GM10248 (cell line): ENCODE measurements at regions of chr6 and their contacts with region 1.

Region 1: DNA sequence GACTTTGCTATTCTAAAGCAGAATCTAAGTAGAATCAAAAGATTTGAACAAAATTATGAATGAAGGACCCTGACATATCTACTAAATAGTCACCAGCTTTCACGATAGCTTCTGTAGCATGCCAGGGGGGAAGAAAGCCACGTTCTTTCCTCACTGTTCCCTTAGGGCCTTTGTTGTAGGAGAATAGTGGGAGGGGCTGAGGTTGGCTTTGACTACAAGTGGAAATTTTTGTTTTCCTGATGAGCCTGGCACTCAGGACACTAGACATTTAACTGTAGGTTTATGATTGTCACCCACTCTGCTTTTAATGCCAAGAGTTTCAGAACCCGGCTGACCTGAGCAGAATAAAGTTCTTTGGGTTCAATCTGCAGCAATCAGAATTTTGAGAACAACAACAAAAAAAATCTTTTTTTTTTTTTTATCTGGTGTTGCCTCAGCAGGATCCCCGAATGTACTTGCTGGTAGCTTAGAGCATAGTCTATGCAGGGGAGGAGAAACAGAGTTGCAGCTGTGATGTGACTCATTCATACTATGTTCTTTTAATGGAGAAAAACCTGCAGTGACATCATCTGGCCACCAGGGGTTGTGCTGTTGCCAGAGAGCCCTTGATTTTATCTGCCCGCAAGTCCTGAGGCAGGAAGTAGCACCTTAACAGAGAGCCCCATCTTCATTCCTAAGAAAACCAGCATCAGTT is 38.5 kb downstream of the TPD52L1 start:
- DNase-seq: peak; percentile 54
- CTCF ChIP-seq: peak; percentile 70

Region 2: GRCh38 chr6:125165256-125165655 is 26.8 kb before region 1 on chr6:
- CTCF ChIA-PET with region 1: interaction called, 10 read pairs
- POLR2A ChIA-PET with region 1: no interaction called
- DNase-seq: no peak
- CTCF ChIP-seq: no peak

Region 3: GRCh38 chr6:125174626-125175025 is 17.4 kb before region 1 on chr6:
- CTCF ChIA-PET with region 1: interaction called, 12 read pairs
- POLR2A ChIA-PET with region 1: no interaction called
- DNase-seq: no peak
- CTCF ChIP-seq: no peak

Region 4: DNA sequence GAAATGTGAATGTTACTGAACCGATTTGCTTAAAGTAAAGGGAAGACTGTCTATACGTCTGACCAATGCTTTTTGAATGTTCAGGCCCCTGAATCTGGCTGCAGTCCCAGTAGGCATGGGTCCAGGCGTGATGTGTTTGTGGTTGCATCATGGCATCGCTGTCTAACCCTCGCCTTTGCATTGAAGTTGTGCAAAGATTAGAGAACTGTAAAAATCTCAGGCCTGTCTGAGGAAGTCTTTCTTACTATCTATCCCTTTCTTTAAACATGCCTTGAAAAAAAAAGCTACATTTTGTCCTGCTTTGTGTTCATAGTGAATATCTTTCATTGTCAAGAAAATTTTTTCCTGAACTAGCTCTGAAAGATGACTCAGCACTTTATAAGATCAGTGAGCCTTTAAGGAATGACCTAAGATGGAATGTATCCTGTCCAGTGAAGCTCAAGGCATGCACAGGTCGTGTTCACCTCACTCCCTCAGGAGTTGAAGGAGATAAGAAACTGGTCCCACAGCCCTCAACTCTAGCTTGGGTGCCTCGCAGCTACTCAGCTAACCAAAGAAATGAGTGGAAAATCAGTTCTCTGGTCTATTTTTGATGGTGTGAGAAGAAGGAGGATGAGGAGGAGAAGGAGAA is 10.0 kb after region 1 on chr6:
- CTCF ChIA-PET with region 1: interaction called, 56 read pairs
- POLR2A ChIA-PET with region 1: no interaction called
- DNase-seq: no peak
- CTCF ChIP-seq: no peak

Region 5: GRCh38 chr6:125212377-125212776 is 20.3 kb after region 1 on chr6:
- CTCF ChIA-PET with region 1: interaction called, 23 read pairs
- POLR2A ChIA-PET with region 1: no interaction called
- DNase-seq: no peak
- CTCF ChIP-seq: no peak